Naive thymus-derived CD4-positive, alpha-beta T cell (primary cell): ENCODE measurements at regions of chr18 and their contacts with region 1.

Region 1: GRCh38 chr18:26656944-26657536 is 108.7 kb upstream of the KCTD1 start:
- DNase-seq: peak in 2 of 9 donors; percentile 13 to 40
- ATAC-seq: peak; percentile 73
- H3K4me3 ChIP-seq: no peak overlapping the region
- H3K4me3 Mint-ChIP-seq: peak overlapping the region; percentile 68 to 84 (median 79)
- H3K27ac ChIP-seq: no peak overlapping the region
- H3K27ac Mint-ChIP-seq: no peak overlapping the region
- H3K4me1 ChIP-seq: no peaks in the 10 kb centered on the region
- H3K4me1 Mint-ChIP-seq: peaks cover 7 to 20% (median 15%) of the 10 kb centered on the region in 7 donors
- H3K27me3 ChIP-seq: peaks cover 0 to 4% of the 10 kb centered on the region in 2 donors
- H3K27me3 Mint-ChIP-seq: peaks cover 67 to 79% (median 72%) of the 10 kb centered on the region in 5 donors

Region 2: DNA sequence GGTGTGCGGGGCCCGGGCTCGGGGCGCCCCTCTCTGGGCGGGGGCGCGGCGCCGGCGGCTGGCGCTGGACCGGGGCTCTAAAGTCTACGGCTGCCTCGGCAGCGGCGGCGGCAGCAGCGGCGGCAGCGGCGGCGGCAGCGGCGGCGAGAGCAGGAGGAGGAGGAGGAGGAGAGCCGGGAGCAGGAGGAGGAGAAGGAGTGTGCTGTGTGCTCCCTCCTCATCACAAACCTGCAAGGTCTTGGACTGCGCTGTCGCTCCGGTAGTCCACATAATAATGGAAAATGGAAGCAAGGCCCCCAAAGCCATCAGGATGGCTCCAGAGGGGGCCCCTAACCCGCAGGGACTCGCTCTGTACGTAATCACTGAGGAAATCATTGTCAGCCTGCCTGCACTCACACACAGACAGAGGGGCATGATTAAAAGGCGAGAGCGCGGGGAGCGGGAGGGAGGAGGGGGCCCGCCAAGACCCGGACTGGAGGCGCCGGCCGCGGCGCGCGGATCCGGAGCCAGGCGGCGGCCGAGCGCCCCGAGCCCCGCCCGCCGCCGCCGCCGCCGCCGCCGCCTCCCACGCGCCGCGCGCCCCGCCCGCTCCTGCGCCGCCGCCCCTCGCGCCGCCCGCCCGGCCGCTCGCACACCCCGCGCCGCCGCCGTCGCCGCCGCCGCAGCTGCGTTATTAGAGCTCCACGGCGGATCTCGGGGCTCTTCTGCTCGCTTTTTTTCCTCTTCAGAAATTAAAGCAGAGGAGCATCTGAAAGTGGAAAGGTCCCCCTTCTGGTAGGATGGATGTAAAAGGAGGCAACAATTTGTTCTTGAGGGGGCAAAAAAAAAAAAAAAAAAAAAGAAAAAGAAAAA is 1305.0 kb before region 1 on chr18 and contains the start of gene ZNF521:
- CTCF ChIA-PET with region 1: no interaction called
- POLR2A ChIA-PET with region 1: no interaction called
- intact Hi-C with region 1: loop called in 1 of 2 experiments (anchors 10 kb)
- DNase-seq: peak in 8 of 9 donors; percentile 17 to 66 (median 28)
- ATAC-seq: peak; percentile 83
- H3K4me3 ChIP-seq: peak within 1 kb of the TSS; percentile 38
- H3K4me3 Mint-ChIP-seq: peak within 1 kb of the TSS; percentile 66 to 90 (median 84)
- H3K27ac ChIP-seq: no peak within 1 kb of the TSS
- H3K27ac Mint-ChIP-seq: peak within 1 kb of the TSS in 1 of 9 donors; percentile 9
- H3K4me1 ChIP-seq: peaks cover 0 to 11% of the 10 kb centered on the region in 2 donors
- H3K4me1 Mint-ChIP-seq: peaks cover 9 to 27% (median 17%) of the 10 kb centered on the region in 7 donors
- H3K27me3 ChIP-seq: peaks cover 6 to 26% of the 10 kb centered on the region in 2 donors
- H3K27me3 Mint-ChIP-seq: peaks cover 55 to 70% (median 66%) of the 10 kb centered on the region in 5 donors
- total RNA-seq, gene ZNF521: 1.1 to 4.4 TPM in 2 of 5 experiments, not detected in the others